Motor neuron (in vitro differentiated cells): ENCODE measurements at regions of chr4 and their contacts with region 1.

Region 1: DNA sequence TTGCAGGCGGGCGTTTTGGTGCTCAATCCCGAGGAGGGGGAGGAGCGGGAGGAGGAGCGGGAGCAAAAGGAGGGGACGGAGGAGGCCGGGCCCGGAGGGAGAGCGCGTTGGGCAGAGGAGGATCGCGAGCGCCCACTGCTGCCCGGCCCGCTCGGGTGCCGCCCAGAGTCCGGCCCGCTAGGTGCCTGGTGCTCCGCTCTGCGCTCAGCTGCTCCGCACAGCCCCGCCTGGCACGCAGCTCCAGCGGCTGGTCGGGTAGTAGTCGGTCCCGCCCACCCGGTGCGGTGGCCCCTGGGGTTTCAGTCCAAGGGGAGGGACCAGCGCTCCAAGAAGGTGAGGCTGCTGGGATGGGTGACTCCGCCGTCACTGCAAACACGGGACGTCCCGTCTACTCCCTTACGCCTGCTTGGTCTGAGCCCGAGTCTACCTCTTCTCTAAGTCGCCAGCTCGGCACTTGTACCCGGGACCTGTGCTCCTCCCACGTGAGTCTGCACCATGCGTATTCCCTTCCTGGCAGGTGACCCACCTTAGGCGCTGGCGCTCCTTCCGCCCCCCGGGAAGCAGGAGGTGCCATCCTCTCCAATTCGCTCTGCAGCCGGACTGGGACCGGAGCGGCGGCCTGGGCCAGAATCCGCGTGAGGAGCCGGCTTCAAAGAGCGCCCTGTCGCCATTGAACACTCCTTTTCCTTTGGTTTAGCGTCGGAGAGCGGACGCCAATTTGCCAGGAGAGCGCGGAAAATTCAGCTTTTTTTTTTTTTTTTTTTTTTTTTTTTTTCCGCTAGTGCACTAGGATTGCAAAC is 405 bp upstream of the HS3ST1 start:
- ATAC-seq: peak; percentile 89 to 97 (median 96)
- H3K4me3 ChIP-seq: peak overlapping the region; percentile 38 to 59 (median 53)
- H3K27ac ChIP-seq: no peak overlapping the region
- H3K4me1 ChIP-seq: peaks cover 0 to 11% of the 10 kb centered on the region in 2 donors

Region 2: GRCh38 chr4:10577018-10577417 is 852.1 kb before region 1 on chr4:
- in situ Hi-C with region 1: loop called in 3 of 9 experiments (anchors 10 to 25 kb)
- ATAC-seq: no peak
- H3K4me3 ChIP-seq: no peak overlapping the region
- H3K27ac ChIP-seq: no peak overlapping the region
- H3K4me1 ChIP-seq: peaks cover 0 to 3% of the 10 kb centered on the region in 2 donors

Region 3: DNA sequence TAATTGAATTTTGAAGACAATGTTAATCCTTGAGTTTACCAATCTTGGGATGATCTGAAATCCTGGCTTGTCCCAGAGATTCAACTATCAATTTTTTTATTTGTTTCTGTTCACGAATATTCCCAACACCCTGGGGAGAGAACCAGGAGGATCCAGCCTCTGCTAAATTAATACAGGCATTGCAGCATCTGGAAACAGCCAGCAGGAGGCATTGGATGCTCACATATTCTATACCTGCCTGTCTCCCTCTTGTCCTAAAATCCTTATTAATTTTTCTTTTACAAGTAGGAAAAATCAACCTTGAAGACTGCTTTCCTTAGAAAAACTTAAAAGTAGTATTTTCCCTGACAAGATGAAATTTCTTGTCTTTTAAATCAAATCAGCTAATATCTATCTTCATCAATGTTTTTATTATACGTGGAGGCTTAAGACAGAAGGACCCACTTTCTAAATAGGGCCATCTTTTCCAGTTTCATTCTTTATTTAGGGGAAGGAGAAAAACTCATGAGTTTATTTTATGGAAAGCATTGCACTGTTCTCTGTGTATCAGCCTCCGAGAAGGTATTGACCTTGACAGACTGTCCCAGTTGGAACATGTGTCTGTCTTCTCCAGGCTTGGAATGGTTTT is 846.9 kb before region 1 on chr4:
- in situ Hi-C with region 1: loop called in 3 of 9 experiments (anchors 10 to 25 kb)
- ATAC-seq: peak; percentile 37 to 72 (median 60)
- H3K4me3 ChIP-seq: no peak overlapping the region
- H3K27ac ChIP-seq: no peak overlapping the region
- H3K4me1 ChIP-seq: no peaks in the 10 kb centered on the region

Region 4: GRCh38 chr4:11720292-11720691 is 291.2 kb after region 1 on chr4:
- in situ Hi-C with region 1: loop called in 1 of 9 experiments (anchors 25 kb)
- ATAC-seq: peak in 3 of 8 experiments; percentile 39 to 66 (median 50)
- H3K4me3 ChIP-seq: no peak overlapping the region
- H3K27ac ChIP-seq: no peak overlapping the region
- H3K4me1 ChIP-seq: no peaks in the 10 kb centered on the region

Region 5: DNA sequence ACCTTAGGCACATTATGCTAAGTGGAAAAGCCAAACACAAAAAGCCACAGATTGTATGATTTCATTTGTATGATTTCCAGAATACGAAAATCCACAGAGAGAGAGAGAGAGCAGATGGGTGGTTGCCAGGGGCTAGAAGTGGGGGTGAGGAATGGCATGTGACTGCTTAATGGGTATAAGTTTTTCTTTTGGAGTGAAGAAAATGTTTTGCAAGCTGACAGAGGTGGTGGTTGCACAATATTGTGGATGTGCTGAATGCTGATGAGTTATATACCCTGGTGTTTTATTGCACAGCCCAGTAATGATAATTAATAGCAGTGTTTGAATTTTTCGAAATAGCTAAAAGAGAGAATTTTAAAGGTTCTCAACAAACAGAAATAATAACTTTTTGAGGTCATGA is 385.7 kb after region 1 on chr4:
- in situ Hi-C with region 1: no loop called
- ATAC-seq: peak in 4 of 8 experiments; percentile 35 to 88 (median 66)
- H3K4me3 ChIP-seq: no peak overlapping the region
- H3K27ac ChIP-seq: no peak overlapping the region
- H3K4me1 ChIP-seq: peaks cover 0 to 7% of the 10 kb centered on the region in 2 donors